ENCODE measurements at regions of chr10 and their contacts with region 1.

Region 1: DNA sequence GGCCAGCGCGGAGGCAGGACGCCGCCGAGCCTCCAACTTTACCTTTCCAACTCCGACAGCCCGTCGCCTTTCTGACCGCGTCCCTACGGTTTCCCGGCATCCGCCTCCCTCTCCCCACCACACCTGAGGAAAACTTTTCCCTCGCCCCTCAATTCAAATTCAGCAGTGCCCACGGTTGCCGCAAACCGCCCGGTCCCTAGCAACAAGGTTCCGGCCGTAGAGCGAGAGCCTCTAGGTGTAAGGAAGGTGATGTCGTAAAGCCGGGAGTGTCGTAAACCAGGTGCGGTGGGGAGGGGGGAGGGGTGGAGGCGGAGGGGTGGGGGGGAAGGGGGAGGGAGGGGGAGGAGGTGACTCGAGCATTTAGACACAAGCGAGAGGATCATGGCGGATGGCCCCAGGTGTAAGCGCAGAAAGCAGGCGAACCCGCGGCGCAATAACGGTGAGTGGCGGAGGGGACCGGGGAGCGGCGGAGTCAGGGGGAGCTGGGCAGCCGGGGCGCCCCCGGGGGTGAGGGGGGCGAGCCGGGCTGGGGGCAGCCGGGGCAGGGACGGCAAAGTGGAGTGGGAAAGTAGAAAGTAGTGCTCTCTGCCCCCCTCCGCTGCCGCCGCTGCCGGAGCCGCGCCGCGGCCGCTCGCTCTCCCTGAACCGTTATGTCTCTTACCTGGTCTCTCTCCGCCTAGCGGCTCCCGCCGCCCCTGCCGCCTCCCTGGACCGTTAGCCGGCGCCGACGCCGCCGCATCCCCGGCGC is at the start of gene ZEB1:
- DNase-seq: peak; percentile 93
- ATAC-seq: peak; percentile 55
- H3K4me3 ChIP-seq: peak within 1 kb of the TSS; percentile 65
- H3K27ac ChIP-seq: peak within 1 kb of the TSS; percentile 97
- H3K4me1 ChIP-seq: peaks cover 7% of the 10 kb centered on the region
- H3K27me3 ChIP-seq: no peaks in the 10 kb centered on the region
- CTCF ChIP-seq: peak; percentile 55
- POLR2A ChIP-seq: peak; percentile 65
- RAD21 ChIP-seq: peak; percentile 53
- total RNA-seq, gene ZEB1: 108 and 139 TPM in 2 replicates

Region 2: DNA sequence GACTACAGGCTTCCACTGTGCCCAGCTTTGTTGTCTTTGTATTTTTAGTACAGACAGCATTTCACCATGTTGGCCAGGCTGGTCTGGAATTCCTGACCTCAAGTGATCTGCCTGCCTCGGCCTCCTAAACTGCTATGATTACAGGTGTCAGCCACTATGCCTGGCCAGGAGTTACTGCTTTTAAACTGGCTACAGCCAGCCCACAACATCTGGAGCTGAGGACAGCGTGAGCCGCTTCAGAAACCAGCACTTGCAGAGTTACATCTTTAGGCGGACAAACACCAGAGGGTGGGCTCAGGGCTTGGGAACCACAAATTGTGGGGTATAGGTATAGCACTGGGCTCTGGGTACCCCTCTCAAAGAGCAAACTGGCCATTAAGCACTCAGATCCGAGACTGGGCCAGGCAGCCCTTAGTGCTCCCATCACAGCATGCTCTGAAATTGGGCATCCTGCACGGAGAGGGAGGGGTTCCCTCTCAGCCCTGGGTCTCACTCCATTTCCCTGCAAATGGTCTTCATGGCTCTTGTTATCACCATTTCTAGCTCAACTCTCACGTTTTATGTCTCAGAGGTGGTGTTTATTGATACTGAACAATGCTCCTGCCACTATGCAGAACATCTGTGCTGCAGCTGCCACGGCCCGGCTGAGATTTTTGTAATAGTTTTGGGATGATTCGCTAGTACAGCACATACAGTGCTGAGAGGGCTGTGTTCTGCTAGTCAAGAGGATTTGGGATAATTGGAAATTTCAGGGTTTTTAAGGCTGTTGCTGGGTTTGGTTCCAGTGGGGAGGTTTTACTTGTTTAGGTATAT is 543.0 kb before region 1 on chr10:
- CTCF ChIA-PET with region 1: no interaction called
- POLR2A ChIA-PET with region 1: no interaction called
- dilution Hi-C with region 1: no loop called
- in situ Hi-C with region 1: loop called (anchors 10 kb)
- intact Hi-C with region 1: no loop called
- DNase-seq: peak; percentile 95
- ATAC-seq: peak; percentile 97
- H3K4me3 ChIP-seq: no peak overlapping the region
- H3K27ac ChIP-seq: peak overlapping the region; percentile 87
- H3K4me1 ChIP-seq: peaks cover 11% of the 10 kb centered on the region
- H3K27me3 ChIP-seq: no peaks in the 10 kb centered on the region
- CTCF ChIP-seq: no peak
- POLR2A ChIP-seq: no peak
- RAD21 ChIP-seq: no peak

Region 3: GRCh38 chr10:31031558-31032257 is 287.3 kb before region 1 on chr10 and contains the start of gene ZNF438:
- CTCF ChIA-PET with region 1: no interaction called
- POLR2A ChIA-PET with region 1: no interaction called
- dilution Hi-C with region 1: no loop called
- in situ Hi-C with region 1: no loop called
- intact Hi-C with region 1: loop called (anchors 1 kb)
- DNase-seq: peak; percentile 95
- ATAC-seq: peak; percentile 92
- H3K4me3 ChIP-seq: peak within 1 kb of the TSS; percentile 75
- H3K27ac ChIP-seq: peak within 1 kb of the TSS; percentile 96
- H3K4me1 ChIP-seq: peaks cover 14% of the 10 kb centered on the region
- H3K27me3 ChIP-seq: no peaks in the 10 kb centered on the region
- CTCF ChIP-seq: peak; percentile 53
- POLR2A ChIP-seq: peak; percentile 74; the same call in 1 of the 2 replicates
- RAD21 ChIP-seq: peak; percentile 60
- total RNA-seq, gene ZNF438: 2.8 and 2.9 TPM in 2 replicates

Region 4: DNA sequence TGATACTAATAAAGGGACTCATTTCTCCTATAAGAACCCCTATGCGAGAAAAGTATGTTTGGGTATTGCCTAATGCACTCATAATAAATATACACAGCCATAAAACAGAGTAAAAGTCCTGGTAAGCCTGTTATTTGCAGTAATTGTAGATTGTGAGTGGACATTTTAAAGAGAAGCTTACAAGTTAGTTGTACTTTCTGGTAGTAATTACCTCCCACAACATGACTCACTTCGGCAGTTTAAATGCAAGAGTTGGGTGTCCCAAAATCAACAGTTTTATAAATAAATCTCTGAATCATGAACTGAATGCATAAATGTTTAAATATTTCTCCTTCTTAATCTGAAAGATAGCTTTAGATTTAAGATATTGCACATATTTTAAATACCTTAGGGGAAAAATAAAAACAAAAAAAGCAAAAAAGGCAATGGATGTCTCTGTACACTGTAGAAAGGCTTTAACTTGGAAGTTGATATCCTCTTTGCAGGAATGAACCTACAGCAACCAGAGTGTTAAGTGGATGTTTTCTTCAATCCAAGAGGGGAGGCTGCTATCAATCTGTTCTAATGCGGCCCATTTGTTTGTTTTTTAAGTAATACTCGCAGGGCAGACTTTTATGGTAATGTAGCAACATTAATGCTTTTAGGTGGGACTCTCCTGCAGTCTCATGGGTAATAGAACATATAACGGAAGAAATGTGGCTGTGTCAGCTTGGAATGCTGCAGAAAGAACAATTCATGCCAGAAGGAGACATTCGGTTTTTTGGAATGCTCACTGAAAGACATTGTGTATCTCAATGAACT is 57.3 kb before region 1 on chr10:
- CTCF ChIA-PET with region 1: no interaction called
- POLR2A ChIA-PET with region 1: interaction called, 4 read pairs
- dilution Hi-C with region 1: no loop called
- in situ Hi-C with region 1: no loop called
- intact Hi-C with region 1: loop called (anchors 1 kb)
- DNase-seq: peak; percentile 94
- ATAC-seq: peak; percentile 83
- H3K4me3 ChIP-seq: no peak overlapping the region; the same call in 1 of the 2 replicates
- H3K27ac ChIP-seq: peak overlapping the region; percentile 88
- H3K4me1 ChIP-seq: peaks cover 21% of the 10 kb centered on the region
- H3K27me3 ChIP-seq: no peaks in the 10 kb centered on the region
- CTCF ChIP-seq: no peak
- POLR2A ChIP-seq: no peak
- RAD21 ChIP-seq: no peak; the same call in 1 of the 2 replicates

Region 5: GRCh38 chr10:31490858-31491504 is 172.0 kb after region 1 on chr10:
- CTCF ChIA-PET with region 1: no interaction called
- POLR2A ChIA-PET with region 1: no interaction called
- dilution Hi-C with region 1: no loop called
- in situ Hi-C with region 1: loop called (anchors 10 kb)
- intact Hi-C with region 1: loop called (anchors 10 kb)
- DNase-seq: peak; percentile 52
- ATAC-seq: peak; percentile 70
- H3K4me3 ChIP-seq: no peak overlapping the region
- H3K27ac ChIP-seq: no peak overlapping the region
- H3K4me1 ChIP-seq: peaks cover 5% of the 10 kb centered on the region
- H3K27me3 ChIP-seq: no peaks in the 10 kb centered on the region
- CTCF ChIP-seq: peak; percentile 62
- POLR2A ChIP-seq: no peak
- RAD21 ChIP-seq: peak; percentile 73

Measured in IMR-90 (cell line).